Left ventricle myocardium inferior (tissue), 1 donor: ENCODE measurements at regions of chr2 and their contacts with region 1.

Region 1: GRCh38 chr2:55961318-55961911 is 37.8 kb upstream of the EFEMP1 start:
- DNase-seq: no peak
- H3K4me3 ChIP-seq: no peak overlapping the region
- H3K27ac ChIP-seq: no peak overlapping the region
- H3K4me1 ChIP-seq: peaks cover 9% of the 10 kb centered on the region
- H3K27me3 ChIP-seq: no peaks in the 10 kb centered on the region
- CTCF ChIP-seq: peak; percentile 64

Region 2: DNA sequence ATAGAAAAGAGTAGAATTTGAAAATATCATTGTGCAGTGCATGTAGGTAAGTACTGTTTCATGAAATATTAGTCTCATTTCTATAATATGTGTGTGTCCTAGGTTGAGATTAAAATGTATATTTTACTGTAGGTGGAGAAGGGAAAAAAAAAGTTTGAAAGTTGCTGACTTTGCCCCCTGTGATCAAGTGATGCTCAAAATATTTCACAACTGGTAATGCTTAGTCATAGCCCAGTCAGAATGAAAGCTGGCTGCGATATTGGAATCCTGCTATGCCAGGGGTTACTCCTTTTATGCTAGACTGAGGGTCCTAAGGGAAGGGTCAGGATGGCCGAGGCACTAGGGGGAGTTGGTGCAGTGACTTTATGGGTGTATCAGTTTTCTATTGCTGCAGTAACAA is 461.4 kb before region 1 on chr2:
- intact Hi-C with region 1: no loop called
- DNase-seq: no peak
- H3K4me3 ChIP-seq: no peak overlapping the region
- H3K27ac ChIP-seq: no peak overlapping the region
- H3K4me1 ChIP-seq: no peaks in the 10 kb centered on the region
- H3K27me3 ChIP-seq: no peaks in the 10 kb centered on the region
- CTCF ChIP-seq: no peak

Region 3: DNA sequence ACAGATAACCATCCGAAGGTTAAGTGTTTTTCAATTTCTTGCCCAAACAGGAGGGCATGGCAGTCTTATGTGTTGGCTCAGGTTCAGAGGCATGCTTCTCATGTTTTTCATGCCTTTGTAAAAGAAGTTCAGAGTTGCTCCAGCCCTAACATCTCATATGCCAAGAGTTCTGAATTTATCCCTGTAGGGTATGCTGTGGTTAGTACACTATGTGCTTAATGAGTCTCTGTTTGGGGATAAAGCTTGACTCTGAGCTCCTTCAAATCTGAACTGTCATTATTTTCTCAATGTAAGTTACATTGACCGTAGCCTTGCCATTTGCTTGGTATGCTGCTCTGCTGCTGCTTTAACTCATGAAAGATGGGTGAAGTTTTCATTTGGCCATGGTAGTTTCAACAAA is 199.9 kb before region 1 on chr2:
- intact Hi-C with region 1: loop called (anchors 10 kb)
- DNase-seq: no peak
- H3K4me3 ChIP-seq: no peak overlapping the region
- H3K27ac ChIP-seq: peak overlapping the region; percentile 5
- H3K4me1 ChIP-seq: peaks cover 8% of the 10 kb centered on the region
- H3K27me3 ChIP-seq: peaks cover 10% of the 10 kb centered on the region
- CTCF ChIP-seq: no peak